CD4-positive, alpha-beta memory T cell (primary cell): ENCODE measurements at regions of chr21 and their contacts with region 1.

Region 1: GRCh38 chr21:38766987-38767722 is 38.6 kb upstream of the ETS2 start:
- DNase-seq: peak; percentile 69 to 80 (median 74)
- H3K4me3 ChIP-seq: peak overlapping the region; percentile 63 to 71
- H3K4me3 Mint-ChIP-seq: peak overlapping the region; percentile 85 to 96 (median 92)
- H3K27ac ChIP-seq: peak overlapping the region; percentile 72
- H3K27ac Mint-ChIP-seq: peak overlapping the region; percentile 86 to 96 (median 91)
- H3K4me1 ChIP-seq: peaks cover 27% of the 10 kb centered on the region
- H3K4me1 Mint-ChIP-seq: peaks cover 22 to 35% (median 31%) of the 10 kb centered on the region in 4 donors
- H3K27me3 ChIP-seq: no peaks in the 10 kb centered on the region
- H3K27me3 Mint-ChIP-seq: no peaks in the 10 kb centered on the region

Region 2: DNA sequence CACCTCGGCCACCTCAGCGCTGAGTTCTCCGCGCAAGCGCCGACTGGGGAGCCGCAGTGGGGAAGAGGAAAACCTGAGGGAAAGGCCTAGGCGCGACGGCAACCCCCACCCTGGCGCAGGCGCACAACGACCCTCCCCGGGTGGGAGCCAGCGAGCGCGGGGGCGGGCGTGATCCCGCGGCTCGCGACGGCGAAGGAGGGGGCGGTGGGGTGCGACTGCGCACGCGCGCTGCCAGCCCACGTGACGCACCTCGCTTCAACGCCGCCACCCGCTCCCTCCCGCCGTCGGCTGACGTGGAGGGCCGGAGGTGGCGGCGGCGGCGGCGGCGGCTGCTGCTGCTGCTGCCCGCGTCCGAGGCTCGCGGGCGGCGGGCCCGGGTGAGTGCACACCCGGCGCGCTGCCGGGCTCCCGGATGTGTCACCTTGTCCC is 1694.2 kb before region 1 on chr21 and contains the starts of genes PIGP and TTC3:
- CTCF ChIA-PET with region 1: no interaction called
- POLR2A ChIA-PET with region 1: no interaction called
- intact Hi-C with region 1: loop called (anchors 5 kb)
- DNase-seq: peak; percentile 93 to 97 (median 96)
- H3K4me3 ChIP-seq: peak within 1 kb of the TSS; percentile 83 to 91
- H3K4me3 Mint-ChIP-seq: peak within 1 kb of the TSS; percentile 95 to 100 (median 98)
- H3K27ac ChIP-seq: peak within 1 kb of the TSS; percentile 91
- H3K27ac Mint-ChIP-seq: peak within 1 kb of the TSS; percentile 92 to 100 (median 98)
- H3K4me1 ChIP-seq: peaks cover 36% of the 10 kb centered on the region
- H3K4me1 Mint-ChIP-seq: peaks cover 31 to 63% (median 44%) of the 10 kb centered on the region in 4 donors
- H3K27me3 ChIP-seq: no peaks in the 10 kb centered on the region
- H3K27me3 Mint-ChIP-seq: no peaks in the 10 kb centered on the region
- total RNA-seq, gene PIGP: 17.2 to 19.7 TPM
- total RNA-seq, gene TTC3: 163 to 171 TPM

Region 3: GRCh38 chr21:38805328-38806152 is 38.4 kb after region 1 on chr21 and contains the start of gene ETS2:
- CTCF ChIA-PET with region 1: interaction called, 9 read pairs
- POLR2A ChIA-PET with region 1: interaction called, 18 read pairs
- intact Hi-C with region 1: loop called (anchors 1 kb)
- DNase-seq: peak; percentile 59 to 79 (median 65)
- H3K4me3 ChIP-seq: peak within 1 kb of the TSS; percentile 62 to 82
- H3K4me3 Mint-ChIP-seq: peak within 1 kb of the TSS; percentile 87 to 94 (median 90)
- H3K27ac ChIP-seq: peak within 1 kb of the TSS; percentile 59
- H3K27ac Mint-ChIP-seq: peak within 1 kb of the TSS; percentile 65 to 95 (median 83)
- H3K4me1 ChIP-seq: peaks cover 32% of the 10 kb centered on the region
- H3K4me1 Mint-ChIP-seq: peaks cover 24 to 35% (median 30%) of the 10 kb centered on the region in 4 donors
- H3K27me3 ChIP-seq: no peaks in the 10 kb centered on the region
- H3K27me3 Mint-ChIP-seq: no peaks in the 10 kb centered on the region
- total RNA-seq, gene ETS2: 14.6 to 15.2 TPM

Region 4: GRCh38 chr21:38817371-38818253 is 50.5 kb after region 1 on chr21:
- CTCF ChIA-PET with region 1: no interaction called
- POLR2A ChIA-PET with region 1: no interaction called
- intact Hi-C with region 1: no loop called
- DNase-seq: no peak
- H3K4me3 ChIP-seq: no peak overlapping the region
- H3K4me3 Mint-ChIP-seq: no peak overlapping the region
- H3K27ac ChIP-seq: no peak overlapping the region
- H3K27ac Mint-ChIP-seq: no peak overlapping the region
- H3K4me1 ChIP-seq: no peaks in the 10 kb centered on the region
- H3K4me1 Mint-ChIP-seq: peaks cover 0 to 4% (median 2%) of the 10 kb centered on the region in 4 donors
- H3K27me3 ChIP-seq: no peaks in the 10 kb centered on the region
- H3K27me3 Mint-ChIP-seq: no peaks in the 10 kb centered on the region